Activated CD8-positive, alpha-beta T cell treated with anti-CD3 and anti-CD28 coated beads for 36 hours (primary cell): ENCODE measurements at regions of chr22 and their contacts with region 1.

Region 1: DNA sequence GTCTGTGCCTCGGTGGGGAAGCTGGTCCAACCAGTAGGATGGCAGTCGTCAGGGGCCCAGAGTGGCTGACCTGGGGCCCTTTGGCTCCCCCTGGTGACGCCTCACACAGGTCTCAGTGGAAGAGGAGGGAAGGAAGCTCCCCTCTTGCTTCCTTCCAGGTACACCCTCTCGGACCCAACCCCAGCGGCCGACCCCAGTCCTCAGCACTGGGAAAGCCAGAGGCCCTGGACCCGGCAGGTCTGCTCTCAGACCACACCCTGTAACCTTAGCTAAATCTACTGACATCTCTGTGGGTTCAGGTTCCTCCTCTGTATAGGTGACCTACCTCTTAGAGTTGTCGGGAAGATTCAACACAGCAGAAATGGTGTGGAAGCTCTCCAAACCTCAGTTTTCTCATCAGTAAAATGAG is 3.4 kb upstream of the SCUBE1 start:
- DNase-seq: peak; percentile 80
- ATAC-seq: peak; percentile 72
- H3K4me3 Mint-ChIP-seq: no peak overlapping the region
- H3K27ac Mint-ChIP-seq: no peak overlapping the region
- H3K4me1 Mint-ChIP-seq: peaks cover 6% of the 10 kb centered on the region
- H3K27me3 Mint-ChIP-seq: peaks cover 39% of the 10 kb centered on the region
- CTCF ChIP-seq: peak; percentile 66

Region 2: GRCh38 chr22:43230971-43231723 is 115.4 kb before region 1 on chr22:
- CTCF ChIA-PET with region 1: interaction called, 109 read pairs
- POLR2A ChIA-PET with region 1: no interaction called
- intact Hi-C with region 1: loop called (anchors 5 kb)
- DNase-seq: peak; percentile 77
- ATAC-seq: peak; percentile 90
- H3K4me3 Mint-ChIP-seq: no peak overlapping the region
- H3K27ac Mint-ChIP-seq: no peak overlapping the region
- H3K4me1 Mint-ChIP-seq: peaks cover 5% of the 10 kb centered on the region
- H3K27me3 Mint-ChIP-seq: no peaks in the 10 kb centered on the region
- CTCF ChIP-seq: peak; percentile 99

Region 3: DNA sequence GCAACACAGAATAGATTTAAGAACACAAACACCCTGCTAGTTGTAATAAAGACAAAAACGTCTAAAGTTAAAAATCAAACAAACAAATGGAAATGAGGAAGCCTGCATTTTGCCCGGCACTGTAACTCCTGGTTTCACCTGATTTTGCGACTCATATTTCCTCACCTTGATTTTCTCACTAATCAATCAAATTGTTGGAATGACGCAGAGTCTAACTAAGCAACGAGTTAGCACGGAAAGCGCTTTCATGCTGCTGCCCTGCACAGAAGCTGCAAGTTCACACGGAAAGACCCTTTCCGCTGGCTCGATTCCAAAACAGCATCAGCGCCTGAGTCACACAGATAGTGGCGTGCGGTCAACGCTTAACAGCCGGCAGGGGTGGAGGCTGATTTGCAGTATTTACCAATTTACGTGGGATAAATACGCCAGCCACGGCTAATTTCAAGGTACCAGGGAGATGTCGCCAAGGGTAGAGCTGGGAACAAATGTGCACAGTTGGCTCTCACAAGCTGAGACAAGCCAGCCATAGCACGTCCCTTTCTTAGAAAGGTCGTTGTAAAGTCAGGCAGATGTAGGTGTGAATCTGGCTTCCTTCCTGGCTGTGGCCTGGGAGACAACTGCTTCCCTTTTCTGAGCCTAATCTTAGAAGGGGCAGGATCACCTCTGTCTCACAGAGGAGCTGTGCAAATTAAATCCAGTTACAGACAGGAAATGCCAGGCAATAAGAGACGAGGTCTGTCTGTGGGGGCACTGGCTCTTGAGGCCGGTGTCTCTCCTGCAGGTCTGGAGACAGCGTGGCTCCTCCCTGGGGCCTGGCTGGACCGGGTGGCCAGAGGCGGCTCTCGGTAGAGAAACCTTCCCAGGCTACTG is 82.6 kb before region 1 on chr22:
- CTCF ChIA-PET with region 1: interaction called, 31 read pairs
- POLR2A ChIA-PET with region 1: no interaction called
- intact Hi-C with region 1: no loop called
- DNase-seq: peak; percentile 97
- ATAC-seq: peak; percentile 90
- H3K4me3 Mint-ChIP-seq: peak overlapping the region; percentile 54
- H3K27ac Mint-ChIP-seq: peak overlapping the region; percentile 84
- H3K4me1 Mint-ChIP-seq: peaks cover 24% of the 10 kb centered on the region
- H3K27me3 Mint-ChIP-seq: no peaks in the 10 kb centered on the region
- CTCF ChIP-seq: no peak

Region 4: GRCh38 chr22:43273902-43274484 is 72.5 kb before region 1 on chr22:
- CTCF ChIA-PET with region 1: interaction called, 68 read pairs
- POLR2A ChIA-PET with region 1: no interaction called
- intact Hi-C with region 1: loop called (anchors 5 kb)
- DNase-seq: peak; percentile 42
- ATAC-seq: peak; percentile 86
- H3K4me3 Mint-ChIP-seq: no peak overlapping the region
- H3K27ac Mint-ChIP-seq: no peak overlapping the region
- H3K4me1 Mint-ChIP-seq: no peaks in the 10 kb centered on the region
- H3K27me3 Mint-ChIP-seq: no peaks in the 10 kb centered on the region
- CTCF ChIP-seq: peak; percentile 75

Region 5: DNA sequence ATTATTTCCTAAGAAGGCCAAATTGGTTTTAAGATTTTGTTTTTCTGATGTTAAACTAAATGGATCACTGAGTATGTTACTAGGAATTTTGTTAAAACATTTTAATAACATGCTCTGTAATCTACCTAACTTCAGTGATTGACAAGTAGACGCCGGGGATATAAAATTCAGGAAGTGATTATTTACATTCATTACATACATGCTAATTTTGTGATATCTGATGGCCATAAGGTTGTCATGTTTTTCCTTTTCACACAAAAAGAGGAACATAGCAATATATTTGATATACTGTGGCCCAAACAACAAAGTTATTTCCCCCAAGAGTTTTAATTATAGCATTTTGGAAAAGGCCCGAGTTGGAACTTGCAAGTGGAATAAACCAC is 15.5 kb before region 1 on chr22:
- CTCF ChIA-PET with region 1: interaction called, 12 read pairs
- POLR2A ChIA-PET with region 1: no interaction called
- intact Hi-C with region 1: no loop called
- DNase-seq: no peak
- ATAC-seq: no peak
- H3K4me3 Mint-ChIP-seq: no peak overlapping the region
- H3K27ac Mint-ChIP-seq: no peak overlapping the region
- H3K4me1 Mint-ChIP-seq: peaks cover 4% of the 10 kb centered on the region
- H3K27me3 Mint-ChIP-seq: no peaks in the 10 kb centered on the region
- CTCF ChIP-seq: no peak

Region 6: GRCh38 chr22:43360576-43360975 is 14.1 kb after region 1 on chr22:
- CTCF ChIA-PET with region 1: interaction called, 25 read pairs
- POLR2A ChIA-PET with region 1: interaction called, 3 read pairs
- intact Hi-C with region 1: no loop called
- DNase-seq: no peak
- ATAC-seq: no peak
- H3K4me3 Mint-ChIP-seq: no peak overlapping the region
- H3K27ac Mint-ChIP-seq: no peak overlapping the region
- H3K4me1 Mint-ChIP-seq: no peaks in the 10 kb centered on the region
- H3K27me3 Mint-ChIP-seq: peaks cover 4% of the 10 kb centered on the region
- CTCF ChIP-seq: no peak

Region 7: GRCh38 chr22:43385770-43386641 is 39.5 kb after region 1 on chr22:
- CTCF ChIA-PET with region 1: interaction called, 24 read pairs
- POLR2A ChIA-PET with region 1: no interaction called
- intact Hi-C with region 1: no loop called
- DNase-seq: peak; percentile 78
- ATAC-seq: peak; percentile 89
- H3K4me3 Mint-ChIP-seq: no peak overlapping the region
- H3K27ac Mint-ChIP-seq: no peak overlapping the region
- H3K4me1 Mint-ChIP-seq: peaks cover 5% of the 10 kb centered on the region
- H3K27me3 Mint-ChIP-seq: peaks cover 23% of the 10 kb centered on the region
- CTCF ChIP-seq: peak; percentile 65

Region 8: DNA sequence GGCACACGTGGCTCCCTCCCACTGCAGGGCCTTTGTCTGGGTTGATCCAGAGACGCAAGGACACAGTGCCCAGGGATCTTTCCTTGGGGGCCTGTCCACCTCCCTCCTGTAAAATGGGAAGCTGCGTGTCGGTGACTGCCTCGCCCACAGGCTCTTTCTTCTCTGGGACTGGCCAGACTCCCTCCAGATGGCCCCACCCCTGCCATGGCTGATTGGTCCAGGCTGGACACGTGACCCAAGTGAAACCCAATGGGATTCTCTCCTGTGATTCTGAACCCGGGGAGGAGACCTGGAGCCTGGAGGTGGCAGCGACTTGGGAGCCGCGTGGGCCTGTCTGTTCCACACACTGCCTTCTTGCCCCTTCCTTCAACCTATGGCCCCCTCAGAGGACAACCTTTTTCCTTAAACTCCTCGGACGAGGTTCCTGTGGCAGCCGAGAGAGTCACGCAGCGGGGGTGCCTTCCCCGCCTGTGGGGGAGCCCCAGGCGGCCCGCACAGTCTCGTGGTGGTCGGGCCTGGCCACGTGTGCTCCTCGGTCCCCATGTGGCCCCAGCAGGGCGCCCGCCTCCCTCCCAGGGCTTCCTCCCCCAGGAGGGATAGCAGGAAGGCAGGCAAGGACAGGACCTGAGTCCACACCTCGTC is 52.9 kb after region 1 on chr22:
- CTCF ChIA-PET with region 1: no interaction called
- POLR2A ChIA-PET with region 1: no interaction called
- intact Hi-C with region 1: no loop called
- DNase-seq: no peak
- ATAC-seq: no peak
- H3K4me3 Mint-ChIP-seq: no peak overlapping the region
- H3K27ac Mint-ChIP-seq: no peak overlapping the region
- H3K4me1 Mint-ChIP-seq: no peaks in the 10 kb centered on the region
- H3K27me3 Mint-ChIP-seq: peaks cover 2% of the 10 kb centered on the region
- CTCF ChIP-seq: no peak

Region 9: DNA sequence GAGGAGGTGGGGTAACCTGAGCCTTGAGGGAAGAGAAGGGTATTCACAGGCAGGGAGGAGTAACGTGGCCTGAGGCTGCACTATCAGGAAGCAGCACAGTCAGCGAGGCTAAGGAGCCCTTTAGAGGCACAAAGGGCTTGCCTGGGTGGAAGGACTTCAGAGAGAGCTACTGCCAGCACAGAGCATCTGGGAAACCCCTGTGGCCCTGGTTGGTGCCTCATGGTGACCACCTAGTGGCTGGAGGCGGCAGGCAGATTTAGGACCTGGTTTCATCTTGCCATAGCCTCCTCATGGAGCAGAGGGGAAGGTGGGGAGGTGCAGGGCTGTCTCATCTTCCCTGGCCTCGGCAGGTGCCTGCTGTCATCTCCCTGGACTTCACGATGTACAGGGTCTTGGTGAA is 129.8 kb after region 1 on chr22:
- CTCF ChIA-PET with region 1: no interaction called
- POLR2A ChIA-PET with region 1: no interaction called
- intact Hi-C with region 1: no loop called
- DNase-seq: no peak
- ATAC-seq: no peak
- H3K4me3 Mint-ChIP-seq: no peak overlapping the region
- H3K27ac Mint-ChIP-seq: no peak overlapping the region
- H3K4me1 Mint-ChIP-seq: peaks cover 8% of the 10 kb centered on the region
- H3K27me3 Mint-ChIP-seq: peaks cover 2% of the 10 kb centered on the region
- CTCF ChIP-seq: no peak

Region 10: DNA sequence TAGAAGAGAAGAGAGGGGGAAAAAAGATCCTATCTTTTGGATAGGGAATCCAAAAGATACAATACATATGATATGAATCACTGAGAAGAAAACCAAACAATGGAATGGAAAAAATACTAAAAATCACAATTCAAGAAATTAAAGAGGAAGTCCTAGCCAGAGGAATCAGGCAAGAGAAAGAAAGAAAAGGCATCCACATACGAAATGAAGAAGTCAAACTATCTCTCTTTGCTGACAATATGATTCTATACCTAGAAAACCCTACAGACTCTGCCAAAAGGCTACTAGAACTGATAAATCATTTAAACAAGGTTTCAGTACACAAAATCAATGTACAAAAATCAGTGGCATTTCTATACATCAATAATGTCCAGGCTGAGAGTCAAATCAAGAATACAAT is 374.2 kb after region 1 on chr22:
- CTCF ChIA-PET with region 1: no interaction called
- POLR2A ChIA-PET with region 1: no interaction called
- intact Hi-C with region 1: no loop called
- DNase-seq: no peak
- ATAC-seq: no peak
- H3K4me3 Mint-ChIP-seq: no peak overlapping the region
- H3K27ac Mint-ChIP-seq: no peak overlapping the region
- H3K4me1 Mint-ChIP-seq: no peaks in the 10 kb centered on the region
- H3K27me3 Mint-ChIP-seq: no peaks in the 10 kb centered on the region
- CTCF ChIP-seq: no peak